ENCODE measurements at regions of chr18 and their contacts with region 1.

Region 1: GRCh38 chr18:63963615-63964256 is 6.1 kb upstream of the SERPINB8 start:
- DNase-seq: peak; percentile 48
- H3K4me3 ChIP-seq: no peak overlapping the region
- H3K27ac ChIP-seq: no peak overlapping the region
- H3K4me1 ChIP-seq: peaks cover 14% of the 10 kb centered on the region
- H3K27me3 ChIP-seq: no peaks in the 10 kb centered on the region
- CTCF ChIP-seq: peak; percentile 90 to 92

Region 2: GRCh38 chr18:63859781-63860475 is 103.8 kb before region 1 on chr18:
- CTCF ChIA-PET with region 1: no interaction called
- dilution Hi-C with region 1: no loop called
- in situ Hi-C with region 1: no loop called
- intact Hi-C with region 1: no loop called
- DNase-seq: no peak
- H3K4me3 ChIP-seq: no peak overlapping the region
- H3K27ac ChIP-seq: no peak overlapping the region
- H3K4me1 ChIP-seq: no peaks in the 10 kb centered on the region
- H3K27me3 ChIP-seq: no peaks in the 10 kb centered on the region
- CTCF ChIP-seq: no peak

Region 3: GRCh38 chr18:63909870-63910269 is 53.9 kb before region 1 on chr18:
- CTCF ChIA-PET with region 1: no interaction called
- dilution Hi-C with region 1: no loop called
- in situ Hi-C with region 1: no loop called
- intact Hi-C with region 1: no loop called
- DNase-seq: peak; percentile 71
- H3K4me3 ChIP-seq: no peak overlapping the region
- H3K27ac ChIP-seq: no peak overlapping the region
- H3K4me1 ChIP-seq: peaks cover 9% of the 10 kb centered on the region
- H3K27me3 ChIP-seq: no peaks in the 10 kb centered on the region
- CTCF ChIP-seq: no peak

Region 4: DNA sequence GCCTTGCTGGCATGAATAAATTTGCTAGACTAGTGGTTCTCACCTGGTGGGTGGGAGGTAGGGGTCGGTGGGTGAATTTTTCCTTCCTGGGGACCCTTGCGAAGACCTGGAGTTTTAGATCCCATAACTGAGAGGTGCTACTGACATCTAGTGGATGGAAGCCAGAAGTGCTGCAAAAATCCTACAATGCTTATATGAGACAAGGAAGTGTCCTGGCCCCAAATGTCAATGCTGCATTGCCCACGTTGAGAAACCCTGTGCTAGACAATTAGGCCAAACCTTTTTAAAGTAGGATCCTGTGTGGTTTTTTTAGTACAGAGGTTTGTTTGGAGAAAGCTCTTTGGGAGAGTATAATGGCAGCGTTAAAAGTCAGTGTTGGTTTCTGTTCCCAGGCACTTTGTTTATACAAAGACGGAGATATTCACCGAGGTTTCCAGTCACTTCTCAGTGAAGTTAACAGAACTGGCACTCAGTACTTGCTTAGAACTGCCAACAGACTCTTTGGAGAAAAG is 15.7 kb after region 1 on chr18:
- CTCF ChIA-PET with region 1: interaction called, 3 read pairs
- dilution Hi-C with region 1: no loop called
- in situ Hi-C with region 1: no loop called
- intact Hi-C with region 1: loop called (anchors 1 kb)
- DNase-seq: peak; percentile 24
- H3K4me3 ChIP-seq: no peak overlapping the region
- H3K27ac ChIP-seq: no peak overlapping the region
- H3K4me1 ChIP-seq: peaks cover 8% of the 10 kb centered on the region
- H3K27me3 ChIP-seq: no peaks in the 10 kb centered on the region
- CTCF ChIP-seq: peak; percentile 93 to 96

Region 5: DNA sequence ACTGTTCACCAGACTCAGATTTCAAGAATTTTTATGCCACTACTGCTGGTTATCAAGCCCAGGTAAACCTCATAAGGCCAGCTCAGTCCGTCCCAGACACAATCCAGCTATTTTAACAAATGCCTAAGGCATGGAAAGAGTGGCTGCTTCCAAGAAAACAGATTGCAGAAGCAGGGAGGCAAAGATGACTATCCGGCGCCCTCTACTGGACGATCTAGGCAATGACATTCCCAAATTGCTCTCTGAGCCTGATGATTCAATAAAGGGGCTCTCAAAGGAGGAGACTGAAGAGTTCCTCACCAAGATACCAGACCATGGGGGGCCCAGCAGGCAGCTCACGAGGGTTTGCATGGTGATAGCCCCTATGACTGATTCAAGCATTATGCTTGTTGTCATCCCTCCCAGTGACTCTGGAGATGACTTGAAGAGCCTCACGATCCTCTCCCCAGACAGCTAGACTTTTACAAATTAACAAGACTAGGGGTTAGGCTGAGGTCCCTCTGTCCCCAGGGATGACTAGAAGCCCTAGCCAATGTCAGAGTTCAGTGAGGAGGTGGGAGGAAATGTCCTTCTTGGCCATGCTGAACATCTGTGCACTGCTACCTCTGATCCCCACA is 31.2 kb after region 1 on chr18:
- CTCF ChIA-PET with region 1: interaction called, 7 read pairs
- dilution Hi-C with region 1: no loop called
- in situ Hi-C with region 1: no loop called
- intact Hi-C with region 1: loop called (anchors 1 kb)
- DNase-seq: peak; percentile 50
- H3K4me3 ChIP-seq: no peak overlapping the region
- H3K27ac ChIP-seq: no peak overlapping the region
- H3K4me1 ChIP-seq: peaks cover 12% of the 10 kb centered on the region
- H3K27me3 ChIP-seq: no peaks in the 10 kb centered on the region
- CTCF ChIP-seq: peak; percentile 90 to 91

Region 6: GRCh38 chr18:64037812-64038414 is 74.2 kb after region 1 on chr18:
- CTCF ChIA-PET with region 1: no interaction called
- dilution Hi-C with region 1: no loop called
- in situ Hi-C with region 1: no loop called
- intact Hi-C with region 1: no loop called
- DNase-seq: peak; percentile 3
- H3K4me3 ChIP-seq: no peak overlapping the region
- H3K27ac ChIP-seq: no peak overlapping the region
- H3K4me1 ChIP-seq: no peaks in the 10 kb centered on the region
- H3K27me3 ChIP-seq: no peaks in the 10 kb centered on the region
- CTCF ChIP-seq: peak; percentile 38 to 46